PC-3 (cell line): ENCODE measurements at regions of chr2 and their contacts with region 1.

Region 1: GRCh38 chr2:28392297-28393113 is at the start of gene FOSL2:
- DNase-seq: peak; percentile 99
- ATAC-seq: peak; percentile 61
- H3K4me3 ChIP-seq: peak within 1 kb of the TSS; percentile 87
- H3K27ac ChIP-seq: peak within 1 kb of the TSS; percentile 91
- H3K4me1 ChIP-seq: peaks cover 38% of the 10 kb centered on the region
- H3K27me3 ChIP-seq: no peaks in the 10 kb centered on the region
- CTCF ChIP-seq: no peak
- total RNA-seq, gene FOSL2: 34.2 and 46.8 TPM in 2 replicates

Region 2: GRCh38 chr2:27807476-27807875 is 585.0 kb before region 1 on chr2:
- CTCF ChIA-PET with region 1: no interaction called
- POLR2A ChIA-PET with region 1: no interaction called
- intact Hi-C with region 1: loop called (anchors 1 kb)
- DNase-seq: peak; percentile 57
- ATAC-seq: peak; percentile 25; the same call in 1 of the 2 replicates
- H3K4me3 ChIP-seq: no peak overlapping the region
- H3K27ac ChIP-seq: no peak overlapping the region
- H3K4me1 ChIP-seq: peaks cover 28% of the 10 kb centered on the region
- H3K27me3 ChIP-seq: no peaks in the 10 kb centered on the region
- CTCF ChIP-seq: peak; percentile 79

Region 3: GRCh38 chr2:27977608-27978312 is 414.7 kb before region 1 on chr2:
- CTCF ChIA-PET with region 1: no interaction called
- POLR2A ChIA-PET with region 1: interaction called, 10 read pairs
- intact Hi-C with region 1: no loop called
- DNase-seq: peak; percentile 96
- ATAC-seq: peak; percentile 94
- H3K4me3 ChIP-seq: peak overlapping the region; percentile 2; the same call in 1 of the 2 replicates
- H3K27ac ChIP-seq: peak overlapping the region; percentile 67
- H3K4me1 ChIP-seq: peaks cover 20% of the 10 kb centered on the region
- H3K27me3 ChIP-seq: no peaks in the 10 kb centered on the region
- CTCF ChIP-seq: peak; percentile 27; the same call in 1 of the 2 replicates

Region 4: GRCh38 chr2:28088970-28089369 is 303.5 kb before region 1 on chr2:
- CTCF ChIA-PET with region 1: no interaction called
- POLR2A ChIA-PET with region 1: no interaction called
- intact Hi-C with region 1: loop called (anchors 2 kb)
- DNase-seq: peak; percentile 79
- ATAC-seq: peak; percentile 95
- H3K4me3 ChIP-seq: peak overlapping the region; percentile 39
- H3K27ac ChIP-seq: no peak overlapping the region
- H3K4me1 ChIP-seq: peaks cover 28% of the 10 kb centered on the region
- H3K27me3 ChIP-seq: no peaks in the 10 kb centered on the region
- CTCF ChIP-seq: no peak

Region 5: GRCh38 chr2:28276076-28276618 is 116.4 kb before region 1 on chr2:
- CTCF ChIA-PET with region 1: interaction called, 3 read pairs
- POLR2A ChIA-PET with region 1: interaction called, 5 read pairs
- intact Hi-C with region 1: loop called (anchors 1 kb)
- DNase-seq: peak; percentile 98
- ATAC-seq: peak; percentile 89
- H3K4me3 ChIP-seq: peak overlapping the region; percentile 27; the same call in 1 of the 2 replicates
- H3K27ac ChIP-seq: peak overlapping the region; percentile 99
- H3K4me1 ChIP-seq: peaks cover 42% of the 10 kb centered on the region
- H3K27me3 ChIP-seq: no peaks in the 10 kb centered on the region
- CTCF ChIP-seq: no peak